ENCODE measurements at regions of chr10 and their contacts with region 1.

Region 1: GRCh38 chr10:75401569-75402485 is at the start of gene ZNF503:
- DNase-seq: peak; percentile 98 to 99
- H3K4me3 ChIP-seq: peak within 1 kb of the TSS; percentile 88 to 92
- H3K27ac ChIP-seq: peak within 1 kb of the TSS; percentile 93 to 97
- H3K4me1 ChIP-seq: peaks cover 0 to 31% (median 27%) of the 10 kb centered on the region in 4 donors
- H3K27me3 ChIP-seq: no peaks in the 10 kb centered on the region
- CTCF ChIP-seq: peak; percentile 25 to 53

Region 2: GRCh38 chr10:75261813-75262708 is 139.8 kb before region 1 on chr10:
- intact Hi-C with region 1: no loop called
- DNase-seq: no peak
- H3K4me3 ChIP-seq: no peak overlapping the region
- H3K27ac ChIP-seq: no peak overlapping the region
- H3K4me1 ChIP-seq: peaks cover 0 to 5% (median 0%) of the 10 kb centered on the region in 4 donors
- H3K27me3 ChIP-seq: peaks cover 0 to 17% of the 10 kb centered on the region in 2 donors
- CTCF ChIP-seq: no peak

Region 3: DNA sequence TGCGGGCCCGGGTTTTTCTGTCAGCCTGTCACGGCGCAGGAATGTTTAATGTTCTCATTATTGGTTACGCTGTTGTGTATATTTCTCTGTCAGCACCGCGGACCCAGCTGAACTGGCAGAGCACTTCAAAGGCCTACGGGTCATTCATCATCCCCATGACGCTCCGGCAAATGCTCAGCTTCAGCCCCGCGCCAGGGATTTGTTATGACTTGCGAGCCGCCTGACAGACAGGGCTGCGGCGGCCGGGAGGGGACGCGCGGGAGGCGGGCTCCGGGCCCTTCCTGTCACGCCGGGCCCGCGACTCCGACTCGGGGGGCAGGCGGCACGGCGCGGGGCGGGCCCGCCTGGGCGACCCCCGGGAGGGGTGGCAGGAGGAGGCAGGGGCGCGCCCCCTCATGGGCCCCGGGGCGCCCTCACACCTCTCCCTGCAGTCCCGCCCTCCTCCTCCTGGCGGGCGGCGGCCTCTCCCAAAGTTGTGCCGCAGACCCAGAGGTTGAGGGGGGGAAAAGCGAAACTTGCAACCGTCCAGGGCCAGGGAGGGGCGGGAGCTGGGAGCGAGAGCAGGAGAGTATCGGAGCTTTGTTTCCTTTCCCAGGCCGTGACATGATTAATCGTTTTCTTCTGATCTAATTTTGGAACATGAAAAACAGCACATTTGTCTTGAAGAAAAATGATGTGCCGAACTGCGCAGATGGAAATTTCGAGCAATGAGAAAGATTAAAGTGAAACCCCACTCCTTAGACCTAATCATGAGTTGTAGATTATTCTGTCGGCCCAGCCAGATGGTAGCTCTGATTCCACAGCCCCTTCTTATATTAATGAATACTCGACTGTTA is 106.7 kb before region 1 on chr10:
- intact Hi-C with region 1: loop called (anchors 5 kb)
- DNase-seq: peak; percentile 84 to 92
- H3K4me3 ChIP-seq: peak overlapping the region; percentile 64 to 68
- H3K27ac ChIP-seq: peak overlapping the region; percentile 89 to 91
- H3K4me1 ChIP-seq: peaks cover 0 to 25% (median 16%) of the 10 kb centered on the region in 4 donors
- H3K27me3 ChIP-seq: no peaks in the 10 kb centered on the region
- CTCF ChIP-seq: peak; percentile 7 to 52

Region 4: GRCh38 chr10:75367021-75367487 is 34.8 kb before region 1 on chr10:
- intact Hi-C with region 1: no loop called
- DNase-seq: no peak
- H3K4me3 ChIP-seq: no peak overlapping the region
- H3K27ac ChIP-seq: no peak overlapping the region
- H3K4me1 ChIP-seq: no peaks in the 10 kb centered on the region
- H3K27me3 ChIP-seq: no peaks in the 10 kb centered on the region
- CTCF ChIP-seq: no peak

Region 5: GRCh38 chr10:75910032-75910431 is 508.2 kb after region 1 on chr10:
- intact Hi-C with region 1: loop called (anchors 1 kb)
- DNase-seq: no peak
- H3K4me3 ChIP-seq: no peak overlapping the region
- H3K27ac ChIP-seq: no peak overlapping the region
- H3K4me1 ChIP-seq: no peaks in the 10 kb centered on the region
- H3K27me3 ChIP-seq: no peaks in the 10 kb centered on the region
- CTCF ChIP-seq: peak; percentile 72 to 89

Region 6: GRCh38 chr10:76303682-76304316 is 902.0 kb after region 1 on chr10:
- intact Hi-C with region 1: loop called (anchors 10 kb)
- DNase-seq: peak; percentile 78 to 85
- H3K4me3 ChIP-seq: no peak overlapping the region
- H3K27ac ChIP-seq: no peak overlapping the region
- H3K4me1 ChIP-seq: peaks cover 0 to 27% (median 3%) of the 10 kb centered on the region in 4 donors
- H3K27me3 ChIP-seq: no peaks in the 10 kb centered on the region
- CTCF ChIP-seq: peak; percentile 52 to 55

Region 7: GRCh38 chr10:77004917-77005564 is 1603.2 kb after region 1 on chr10:
- intact Hi-C with region 1: loop called (anchors 5 kb)
- DNase-seq: no peak
- H3K4me3 ChIP-seq: no peak overlapping the region
- H3K27ac ChIP-seq: peak overlapping the region; percentile 7 to 20
- H3K4me1 ChIP-seq: peaks cover 0 to 20% (median 9%) of the 10 kb centered on the region in 4 donors
- H3K27me3 ChIP-seq: no peaks in the 10 kb centered on the region
- CTCF ChIP-seq: peak; percentile 75 to 86

Measured in tibial artery (tissue), 4 donors.